ENCODE measurements at regions of chr17 and their contacts with region 1.

Region 1: DNA sequence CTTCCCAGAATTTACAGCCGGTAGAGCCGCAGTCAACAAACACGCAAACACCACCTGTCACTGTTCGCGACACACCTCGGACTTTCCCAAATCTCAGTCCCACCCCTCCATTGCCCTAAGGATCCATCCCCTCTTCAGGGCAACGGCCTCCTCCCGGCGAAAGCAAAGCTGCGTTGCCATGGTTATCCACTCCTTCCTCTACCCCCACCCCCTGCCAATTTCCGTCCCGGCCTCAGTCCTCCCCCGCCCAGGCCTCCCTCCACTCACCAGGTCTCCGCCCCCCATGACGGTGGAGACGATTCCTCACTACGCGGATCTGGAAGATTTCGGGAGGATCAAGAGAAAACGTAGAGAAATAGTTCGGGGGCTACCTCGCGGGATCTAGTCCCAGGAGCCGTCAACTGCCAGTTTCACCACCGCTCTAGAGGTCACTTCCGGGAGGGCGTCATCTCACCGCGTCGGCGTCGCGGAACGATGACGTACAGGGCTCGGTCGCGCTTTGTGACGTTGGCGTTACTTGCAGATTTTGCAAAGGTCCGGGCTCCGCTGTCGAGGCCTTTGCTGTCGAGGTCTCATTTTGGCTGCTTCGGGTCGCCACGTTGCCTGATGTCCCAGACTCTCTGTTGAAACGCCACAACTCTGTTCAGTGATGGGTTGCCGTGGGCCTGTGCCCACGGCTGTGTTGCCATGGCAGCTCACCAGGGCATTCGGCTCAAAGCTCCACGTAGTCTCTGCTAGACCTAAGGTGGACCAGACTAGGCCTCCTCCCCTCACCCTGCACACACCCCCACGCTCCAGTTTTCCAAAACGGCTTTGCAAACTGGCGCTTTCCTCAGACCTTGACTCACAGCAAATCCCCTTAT is at the start of gene CWC25:
- DNase-seq: peak; percentile 90
- H3K4me3 ChIP-seq: peak within 1 kb of the TSS; percentile 67 to 71
- H3K27ac ChIP-seq: peak within 1 kb of the TSS; percentile 95
- H3K4me1 ChIP-seq: peaks cover 7% of the 10 kb centered on the region
- H3K27me3 ChIP-seq: no peaks in the 10 kb centered on the region
- CTCF ChIP-seq: peak in 2 of 4 experiments; percentile 10 to 23
- POLR2A ChIP-seq: peak; percentile 72
- total RNA-seq, gene CWC25: 21.9 to 23.3 TPM

Region 2: DNA sequence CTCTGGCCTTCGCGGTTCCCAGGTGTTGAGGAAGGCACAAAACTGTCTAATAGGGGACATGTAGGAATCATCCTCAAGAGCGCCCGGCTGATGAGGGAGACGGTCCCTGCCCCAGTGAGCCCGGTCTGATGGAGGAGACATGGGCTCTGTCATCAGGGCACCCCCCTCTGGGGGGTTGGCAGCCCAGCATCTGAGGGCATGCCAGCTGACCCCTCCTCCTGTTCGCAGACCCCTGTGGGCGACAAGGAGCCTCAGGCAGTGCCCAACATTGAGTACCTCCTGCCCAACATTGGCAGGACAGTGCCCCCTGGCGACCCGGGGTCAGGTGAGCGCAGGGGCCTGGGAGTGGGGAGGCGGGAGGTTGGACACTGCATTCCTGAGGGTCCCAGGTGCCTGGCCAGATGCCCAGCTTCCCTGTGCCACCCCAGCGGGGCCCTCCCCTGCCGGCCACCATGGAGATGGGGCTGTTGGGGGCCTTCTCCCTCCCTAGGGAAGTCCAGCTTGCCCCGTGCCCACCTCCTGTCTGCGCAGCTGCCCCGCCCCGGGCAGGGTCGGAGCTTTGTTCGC is 326.9 kb before region 1 on chr17:
- intact Hi-C with region 1: no loop called
- DNase-seq: no peak
- H3K4me3 ChIP-seq: no peak overlapping the region
- H3K27ac ChIP-seq: no peak overlapping the region
- H3K4me1 ChIP-seq: no peaks in the 10 kb centered on the region
- H3K27me3 ChIP-seq: no peaks in the 10 kb centered on the region
- CTCF ChIP-seq: no peak
- POLR2A ChIP-seq: no peak

Region 3: DNA sequence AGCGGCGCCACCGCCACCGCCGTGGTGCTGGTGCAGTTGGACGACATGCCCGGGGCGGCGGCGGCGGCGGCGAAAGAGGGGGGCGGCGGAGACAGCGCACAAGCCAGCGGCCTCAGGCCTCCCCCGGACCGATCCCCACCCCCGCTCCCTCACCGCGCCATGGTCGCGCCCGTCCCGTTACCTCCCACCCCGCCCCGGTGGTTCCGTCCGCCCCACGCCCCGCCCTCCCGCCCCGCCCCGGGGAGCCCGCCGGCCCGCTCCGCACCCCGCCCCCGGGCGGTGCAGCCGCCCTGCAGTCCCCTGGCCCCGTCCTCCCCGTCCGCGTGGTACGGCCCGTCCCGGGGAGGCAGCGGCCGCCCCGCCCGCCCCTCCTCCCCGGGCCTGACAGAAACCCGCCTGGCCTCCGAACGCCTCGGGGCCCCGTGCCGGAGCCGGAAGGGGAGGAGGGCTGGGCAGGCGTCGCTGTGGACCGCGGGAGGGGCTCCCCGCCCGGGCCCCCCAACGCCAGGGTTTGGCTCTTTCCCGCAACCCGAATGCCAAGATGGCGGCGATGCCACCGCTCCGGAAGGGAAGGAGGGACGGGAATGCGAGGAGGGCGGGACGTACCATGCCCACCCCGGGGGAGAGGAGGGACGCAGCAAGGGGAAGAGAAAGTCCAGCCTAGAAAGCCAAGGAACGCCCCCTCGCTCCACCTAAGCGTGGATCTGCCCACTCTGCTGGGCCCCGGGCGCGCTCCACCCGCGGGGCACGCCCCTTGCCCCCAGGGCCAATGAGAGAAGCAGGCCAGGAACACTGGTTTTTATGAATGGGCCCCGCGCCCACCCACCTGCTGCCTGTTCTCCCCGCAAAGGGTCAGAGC is 25.5 kb before region 1 on chr17 and contains the start of gene PIP4K2B:
- intact Hi-C with region 1: no loop called
- DNase-seq: peak; percentile 94
- H3K4me3 ChIP-seq: peak within 1 kb of the TSS; percentile 87 to 88
- H3K27ac ChIP-seq: peak within 1 kb of the TSS; percentile 99
- H3K4me1 ChIP-seq: peaks cover 11% of the 10 kb centered on the region
- H3K27me3 ChIP-seq: no peaks in the 10 kb centered on the region
- CTCF ChIP-seq: no peak
- POLR2A ChIP-seq: no peak
- total RNA-seq, gene PIP4K2B: 46.2 to 65.2 TPM

Region 4: GRCh38 chr17:38853292-38854219 is 28.4 kb after region 1 on chr17 and contains the start of gene RPL23:
- intact Hi-C with region 1: loop called (anchors 1 kb)
- DNase-seq: peak; percentile 97
- H3K4me3 ChIP-seq: peak within 1 kb of the TSS; percentile 47 to 50
- H3K27ac ChIP-seq: peak within 1 kb of the TSS; percentile 82 to 92
- H3K4me1 ChIP-seq: peaks cover 4% of the 10 kb centered on the region
- H3K27me3 ChIP-seq: no peaks in the 10 kb centered on the region
- CTCF ChIP-seq: peak in 2 of 4 experiments; percentile 9 to 21
- POLR2A ChIP-seq: peak; percentile 68
- total RNA-seq, gene RPL23: 1,006 to 2,029 TPM

Region 5: GRCh38 chr17:38869526-38870258 is 44.6 kb after region 1 on chr17 and contains the start of gene LASP1:
- intact Hi-C with region 1: no loop called
- DNase-seq: peak; percentile 89
- H3K4me3 ChIP-seq: peak within 1 kb of the TSS; percentile 84 to 93
- H3K27ac ChIP-seq: peak within 1 kb of the TSS; percentile 97
- H3K4me1 ChIP-seq: peaks cover 15% of the 10 kb centered on the region
- H3K27me3 ChIP-seq: no peaks in the 10 kb centered on the region
- CTCF ChIP-seq: peak in 1 of 4 experiments; percentile 12
- POLR2A ChIP-seq: peak; percentile 96
- total RNA-seq, gene LASP1: 61.8 to 93.4 TPM